ENCODE measurements at regions of chr12 and their contacts with region 1.

Region 1: GRCh38 chr12:46153268-46153872 is 115.5 kb downstream of the SLC38A1 start:
- DNase-seq: peak in 1 of 2 donors; percentile 64
- ATAC-seq: no peak
- H3K4me3 ChIP-seq: no peak overlapping the region
- H3K4me3 Mint-ChIP-seq: no peak overlapping the region
- H3K27ac ChIP-seq: no peak overlapping the region
- H3K27ac Mint-ChIP-seq: no peak overlapping the region
- H3K4me1 ChIP-seq: no peaks in the 10 kb centered on the region
- H3K4me1 Mint-ChIP-seq: peaks cover 7 to 10% of the 10 kb centered on the region in 2 donors
- H3K27me3 ChIP-seq: no peaks in the 10 kb centered on the region
- H3K27me3 Mint-ChIP-seq: peaks cover 13 to 35% of the 10 kb centered on the region in 2 donors
- CTCF ChIP-seq: peak; percentile 66

Region 2: GRCh38 chr12:46303039-46303666 is 149.8 kb after region 1 on chr12:
- intact Hi-C with region 1: loop called (anchors 1 kb)
- DNase-seq: peak in 1 of 2 donors; percentile 88
- ATAC-seq: peak; percentile 84 to 92 (median 91)
- H3K4me3 ChIP-seq: no peak overlapping the region
- H3K4me3 Mint-ChIP-seq: no peak overlapping the region
- H3K27ac ChIP-seq: no peak overlapping the region
- H3K27ac Mint-ChIP-seq: no peak overlapping the region
- H3K4me1 ChIP-seq: no peaks in the 10 kb centered on the region
- H3K4me1 Mint-ChIP-seq: peaks cover 0 to 5% of the 10 kb centered on the region in 2 donors
- H3K27me3 ChIP-seq: no peaks in the 10 kb centered on the region
- H3K27me3 Mint-ChIP-seq: peaks cover 16 to 19% of the 10 kb centered on the region in 2 donors
- CTCF ChIP-seq: peak; percentile 90